Uterus (tissue), 4 donors: ENCODE measurements at regions of chr1 and their contacts with region 1.

Region 1: DNA sequence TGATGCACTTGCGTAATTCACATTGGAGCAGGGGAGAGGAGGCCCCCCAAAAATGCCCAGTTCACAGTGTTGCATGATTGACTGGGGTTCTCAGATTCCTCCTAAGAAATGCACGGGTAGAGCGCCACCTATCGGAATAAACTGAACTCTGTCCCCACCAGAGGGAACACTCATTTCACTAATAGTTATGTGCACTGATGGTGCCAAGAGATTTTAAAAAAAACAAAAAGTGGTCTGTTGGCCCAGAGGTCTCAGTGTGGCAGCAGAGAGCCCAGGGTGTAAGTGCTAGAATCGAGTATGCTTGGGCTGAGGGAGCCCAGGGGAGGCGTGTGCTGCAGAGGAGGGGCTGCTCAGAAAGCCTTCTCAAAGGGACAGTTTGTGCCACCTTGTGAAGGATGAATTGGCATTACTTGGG is 6.9 kb downstream of the PINK1 start:
- DNase-seq: peak in 1 of 2 donors; percentile 31
- H3K4me3 ChIP-seq: no peak overlapping the region
- H3K27ac ChIP-seq: no peak overlapping the region
- H3K4me1 ChIP-seq: no peaks in the 10 kb centered on the region
- H3K27me3 ChIP-seq: no peaks in the 10 kb centered on the region
- CTCF ChIP-seq: peak; percentile 43 to 71 (median 62)
- POLR2A ChIP-seq: no peak

Region 2: GRCh38 chr1:20521960-20522861 is 118.0 kb before region 1 on chr1:
- intact Hi-C with region 1: loop called (anchors 10 kb)
- DNase-seq: peak; percentile 76 to 80
- H3K4me3 ChIP-seq: no peak overlapping the region
- H3K27ac ChIP-seq: no peak overlapping the region
- H3K4me1 ChIP-seq: no peaks in the 10 kb centered on the region
- H3K27me3 ChIP-seq: no peaks in the 10 kb centered on the region
- CTCF ChIP-seq: peak; percentile 89 to 94 (median 90)
- POLR2A ChIP-seq: no peak

Region 3: DNA sequence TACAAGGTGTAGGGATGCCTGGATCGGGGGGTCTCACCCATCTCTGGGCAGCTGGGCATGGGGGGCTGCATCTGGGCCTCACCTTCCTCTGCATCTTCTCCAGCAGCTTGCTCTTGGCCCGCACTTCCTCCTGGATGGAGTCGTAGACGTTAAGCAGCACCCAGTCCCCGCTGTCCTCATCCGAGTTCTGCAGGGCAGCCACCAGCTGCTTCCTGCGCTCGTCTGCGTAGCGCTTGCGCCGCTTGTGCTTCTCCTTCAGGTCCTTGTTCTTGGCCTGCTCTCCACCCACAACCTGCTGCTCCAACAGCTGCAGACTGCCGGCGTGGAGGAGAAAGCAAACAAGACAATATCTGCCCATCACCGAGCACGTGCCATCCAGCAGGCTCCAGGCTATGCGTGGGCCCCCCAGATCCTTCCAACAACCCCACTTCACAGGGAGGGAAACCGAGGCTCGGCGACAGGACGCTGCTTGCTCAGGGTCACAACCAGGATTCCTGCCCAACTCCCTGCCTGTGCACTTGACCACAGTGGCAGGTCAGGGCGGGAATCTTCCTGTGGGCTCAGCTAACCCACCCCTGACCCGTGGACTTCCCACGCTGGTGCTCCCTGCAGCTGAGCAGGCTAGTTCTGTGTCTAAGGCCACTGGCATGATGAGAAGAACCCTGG is 42.5 kb after region 1 on chr1:
- intact Hi-C with region 1: no loop called
- DNase-seq: no peak
- H3K4me3 ChIP-seq: no peak overlapping the region
- H3K27ac ChIP-seq: no peak overlapping the region
- H3K4me1 ChIP-seq: no peaks in the 10 kb centered on the region
- H3K27me3 ChIP-seq: no peaks in the 10 kb centered on the region
- CTCF ChIP-seq: no peak
- POLR2A ChIP-seq: no peak